HepG2 (cell line): ENCODE measurements at regions of chr7 and their contacts with region 1.

Region 1: DNA sequence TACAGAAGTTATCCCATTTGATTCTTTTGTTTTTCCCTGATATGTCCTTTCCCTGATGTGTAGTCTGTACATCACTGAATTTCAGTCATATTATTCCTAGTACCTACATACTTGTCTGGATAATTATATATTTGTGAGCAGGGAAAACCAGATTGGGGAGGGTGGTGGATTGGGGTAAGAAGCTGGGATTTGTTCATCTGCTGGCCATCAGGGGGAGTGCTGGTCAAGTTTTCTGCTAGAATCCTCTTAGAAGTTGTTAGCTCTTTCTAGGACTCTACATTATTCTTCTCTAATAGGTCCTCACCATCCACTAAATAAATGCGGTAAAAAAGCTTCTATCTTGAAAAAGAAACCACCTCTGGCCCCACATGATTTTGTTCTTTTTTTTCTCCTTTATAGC is 232.7 kb upstream of the TAC1 start:
- DNase-seq: peak; percentile 27
- ATAC-seq: peak; percentile 73
- H3K4me3 ChIP-seq: no peak overlapping the region
- H3K27ac ChIP-seq: no peak overlapping the region
- H3K4me1 ChIP-seq: no peaks in the 10 kb centered on the region
- H3K27me3 ChIP-seq: no peaks in the 10 kb centered on the region
- CTCF ChIP-seq: peak; percentile 60
- EP300 ChIP-seq: no peak
- POLR2A ChIP-seq: no peak
- RAD21 ChIP-seq: no peak

Region 2: DNA sequence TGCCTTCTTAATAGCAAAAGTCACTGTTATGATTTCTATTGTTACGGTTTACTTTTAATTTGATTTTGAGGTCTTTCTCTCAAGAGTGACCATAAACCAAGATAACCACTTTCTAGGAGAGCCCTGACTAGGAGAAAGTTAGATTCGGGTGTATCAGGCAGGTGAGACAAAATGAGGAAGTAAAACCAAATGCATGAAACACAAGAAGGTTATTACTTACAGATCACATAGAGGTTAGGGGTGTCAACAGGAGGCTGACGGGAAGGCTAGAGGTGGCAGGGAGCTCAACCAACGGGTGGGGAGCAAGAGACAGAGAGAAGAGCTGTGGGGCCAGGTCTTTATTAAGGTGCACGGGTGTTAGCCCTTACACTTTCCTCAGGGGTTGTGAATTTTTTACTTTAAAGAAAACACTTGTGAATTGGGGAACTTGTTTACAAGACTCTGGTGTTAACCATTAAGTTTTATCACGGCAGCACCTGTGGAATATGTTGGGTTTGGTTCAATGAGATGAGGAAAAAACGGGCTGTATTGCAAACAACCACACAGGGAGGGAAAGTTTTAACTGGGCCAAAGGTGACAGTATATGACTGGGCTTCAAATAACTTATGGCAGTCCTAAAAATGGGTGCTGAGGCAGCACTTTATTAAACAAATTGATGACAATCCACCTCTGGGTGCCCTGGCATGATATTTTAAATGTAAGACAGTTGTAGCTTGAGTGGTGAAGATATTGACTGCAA is 226.8 kb before region 1 on chr7:
- CTCF ChIA-PET with region 1: no interaction called
- POLR2A ChIA-PET with region 1: no interaction called
- in situ Hi-C with region 1: no loop called
- intact Hi-C with region 1: no loop called
- DNase-seq: no peak
- ATAC-seq: no peak
- H3K4me3 ChIP-seq: no peak overlapping the region
- H3K27ac ChIP-seq: no peak overlapping the region
- H3K4me1 ChIP-seq: no peaks in the 10 kb centered on the region
- H3K27me3 ChIP-seq: peaks cover 0 to 8% of the 10 kb centered on the region in 2 experiments; a peak in 2 of 5 replicates
- CTCF ChIP-seq: no peak
- EP300 ChIP-seq: no peak
- POLR2A ChIP-seq: no peak
- RAD21 ChIP-seq: no peak

Region 3: DNA sequence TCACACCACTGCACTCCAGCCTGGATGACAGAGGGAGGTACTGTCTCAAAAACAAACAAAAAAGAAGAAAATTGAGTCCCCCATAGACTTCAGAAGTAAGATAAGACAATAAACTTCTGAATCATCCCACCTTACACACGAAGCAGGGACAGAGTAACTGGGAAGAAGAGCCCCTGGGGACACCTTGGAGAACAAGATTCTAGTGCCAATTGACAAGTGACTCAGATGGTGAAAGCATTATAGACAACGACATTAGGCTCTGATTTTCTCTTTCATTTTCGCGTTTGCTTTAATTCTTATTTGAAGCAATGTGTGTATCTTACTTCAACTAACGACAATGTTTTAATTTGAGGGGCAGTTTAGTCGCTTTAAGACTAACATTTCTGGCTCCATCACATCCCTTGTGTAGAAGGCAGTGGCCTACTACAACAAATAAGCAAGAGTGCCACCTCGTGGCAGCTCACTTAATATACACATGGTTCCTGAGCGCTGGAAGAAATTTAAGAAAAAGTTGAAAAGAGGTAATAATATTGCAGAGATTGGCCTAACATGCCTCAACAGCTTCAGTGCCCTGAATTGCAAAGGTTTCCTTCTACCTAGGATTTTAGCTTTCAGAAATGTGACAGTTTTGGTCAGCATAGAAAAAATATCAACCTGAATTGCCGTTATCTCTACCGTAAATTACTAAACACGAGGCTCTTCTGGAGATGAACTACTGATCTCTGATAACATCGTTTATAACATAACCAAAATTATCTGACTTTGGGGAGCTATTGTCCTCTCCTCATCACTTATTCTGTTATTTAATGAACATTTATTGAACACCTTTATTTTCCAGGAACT is 336.3 kb after region 1 on chr7:
- CTCF ChIA-PET with region 1: interaction called, 9 read pairs
- POLR2A ChIA-PET with region 1: no interaction called
- in situ Hi-C with region 1: loop called (anchors 10 kb)
- intact Hi-C with region 1: no loop called
- DNase-seq: peak; percentile 53
- ATAC-seq: peak; percentile 88
- H3K4me3 ChIP-seq: no peak overlapping the region
- H3K27ac ChIP-seq: no peak overlapping the region
- H3K4me1 ChIP-seq: no peaks in the 10 kb centered on the region
- H3K27me3 ChIP-seq: no peaks in the 10 kb centered on the region; a peak in 2 of 5 replicates
- CTCF ChIP-seq: peak; percentile 77
- EP300 ChIP-seq: no peak
- POLR2A ChIP-seq: no peak
- RAD21 ChIP-seq: peak; percentile 16; the same call in 1 of the 2 replicates